Endothelial cell of umbilical vein (primary cell): ENCODE measurements at regions of chr1 and their contacts with region 1.

Region 1: GRCh38 chr1:234987415-234988154 is 141.1 kb downstream of the TOMM20 start:
- DNase-seq: peak; percentile 98
- H3K4me3 ChIP-seq: no peak overlapping the region
- H3K27ac ChIP-seq: peak overlapping the region; percentile 100
- H3K4me1 ChIP-seq: peaks cover 47% of the 10 kb centered on the region
- H3K27me3 ChIP-seq: no peaks in the 10 kb centered on the region
- CTCF ChIP-seq: no peak
- POLR2A ChIP-seq: no peak

Region 2: DNA sequence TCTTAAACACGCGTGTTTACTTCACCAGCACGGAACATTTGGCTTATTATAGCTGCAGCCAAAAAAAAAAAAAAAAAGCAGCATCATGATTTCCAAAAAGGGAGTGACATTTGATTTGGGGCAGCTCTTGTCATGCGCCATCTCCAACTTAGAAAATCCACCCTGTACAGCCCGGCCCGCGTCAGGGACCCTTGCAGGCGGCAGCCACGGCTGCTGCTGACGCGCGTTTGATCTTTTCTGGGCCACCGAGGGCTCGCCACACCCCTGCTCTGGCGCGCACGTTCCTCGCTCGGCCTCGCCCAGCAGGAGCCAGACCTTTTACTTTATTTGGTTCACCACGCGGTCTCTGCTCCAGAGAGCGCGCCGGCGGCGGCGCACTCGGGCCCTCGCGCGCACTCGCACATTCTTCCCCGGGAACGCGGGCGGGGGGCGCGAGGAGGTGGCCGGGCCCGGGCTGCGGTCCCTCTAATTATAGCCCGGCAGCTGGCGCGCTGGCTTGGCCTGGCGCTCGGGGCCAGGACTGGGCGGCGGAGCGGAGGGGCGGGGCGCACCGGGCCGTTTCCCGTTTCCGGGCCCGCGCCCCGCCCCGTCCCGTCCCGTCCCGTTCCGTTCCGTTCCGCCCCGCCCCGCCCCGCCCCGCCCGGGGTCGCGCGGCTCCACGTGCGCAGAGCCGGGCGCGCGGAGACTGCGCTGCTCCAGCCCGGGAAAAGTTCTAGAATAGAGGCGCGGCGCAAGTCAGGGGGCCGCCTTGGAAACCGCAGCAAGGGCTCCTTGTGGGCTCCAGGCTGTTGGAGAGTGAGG is 387.8 kb before region 1 on chr1:
- CTCF ChIA-PET with region 1: interaction called, 6 read pairs
- POLR2A ChIA-PET with region 1: interaction called, 8 read pairs
- dilution Hi-C with region 1: loop called (anchors 25 kb)
- intact Hi-C with region 1: loop called (anchors 1 kb)
- DNase-seq: peak; percentile 92
- H3K4me3 ChIP-seq: peak overlapping the region; percentile 18 to 53 (median 32)
- H3K27ac ChIP-seq: peak overlapping the region; percentile 87
- H3K4me1 ChIP-seq: peaks cover 50% of the 10 kb centered on the region
- H3K27me3 ChIP-seq: no peaks in the 10 kb centered on the region
- CTCF ChIP-seq: peak in 1 of 2 donors; percentile 3
- POLR2A ChIP-seq: no peak

Region 3: DNA sequence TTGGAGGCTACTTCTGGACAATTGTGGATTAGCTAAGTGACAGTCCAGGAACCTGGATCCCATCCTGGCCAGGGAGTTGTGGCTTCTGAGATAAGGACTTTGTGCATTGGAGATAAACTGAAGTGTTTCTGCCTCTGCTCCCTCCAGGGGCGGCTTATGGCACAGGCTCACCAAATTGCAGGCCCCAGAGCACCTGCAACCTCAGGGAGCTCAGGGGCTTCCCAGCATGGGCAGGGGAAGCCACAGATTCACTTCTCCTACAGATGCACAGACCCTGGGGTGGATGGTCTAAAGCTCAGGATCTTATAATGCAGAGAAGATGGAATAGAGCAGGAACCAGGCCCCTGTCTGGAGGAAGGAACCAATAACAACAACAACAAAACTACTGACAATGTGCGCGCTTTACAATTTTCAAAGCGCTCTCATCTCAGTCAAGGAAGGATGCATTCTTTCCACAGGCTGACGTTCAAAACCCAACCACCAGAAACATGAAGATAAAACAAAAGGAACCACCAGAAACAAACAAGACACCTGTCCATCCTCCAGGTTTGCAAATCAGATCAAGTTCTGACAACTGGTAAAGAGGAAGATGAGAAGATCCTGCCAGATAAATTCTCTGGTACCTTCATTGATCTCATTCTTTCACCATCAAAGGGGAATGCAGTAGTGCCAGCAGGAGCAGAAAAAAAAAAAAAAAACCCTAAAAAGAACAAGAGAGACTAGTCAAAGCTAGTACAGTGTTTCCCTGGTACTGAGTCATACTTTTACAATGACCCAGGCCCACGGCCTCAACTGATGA is 256.6 kb before region 1 on chr1:
- CTCF ChIA-PET with region 1: no interaction called
- POLR2A ChIA-PET with region 1: no interaction called
- dilution Hi-C with region 1: no loop called
- intact Hi-C with region 1: no loop called
- DNase-seq: no peak
- H3K4me3 ChIP-seq: no peak overlapping the region
- H3K27ac ChIP-seq: no peak overlapping the region
- H3K4me1 ChIP-seq: peaks cover 24% of the 10 kb centered on the region
- H3K27me3 ChIP-seq: no peaks in the 10 kb centered on the region
- CTCF ChIP-seq: no peak
- POLR2A ChIP-seq: no peak

Region 4: GRCh38 chr1:234743791-234744611 is 243.6 kb before region 1 on chr1:
- CTCF ChIA-PET with region 1: interaction called, 6 read pairs
- POLR2A ChIA-PET with region 1: no interaction called
- dilution Hi-C with region 1: no loop called
- intact Hi-C with region 1: loop called (anchors 1 kb)
- DNase-seq: peak; percentile 99
- H3K4me3 ChIP-seq: peak overlapping the region in 1 of 3 experiments; percentile 7
- H3K27ac ChIP-seq: peak overlapping the region; percentile 88
- H3K4me1 ChIP-seq: peaks cover 36% of the 10 kb centered on the region
- H3K27me3 ChIP-seq: no peaks in the 10 kb centered on the region
- CTCF ChIP-seq: peak in 1 of 2 donors; percentile 15
- POLR2A ChIP-seq: peak; percentile 91

Region 5: DNA sequence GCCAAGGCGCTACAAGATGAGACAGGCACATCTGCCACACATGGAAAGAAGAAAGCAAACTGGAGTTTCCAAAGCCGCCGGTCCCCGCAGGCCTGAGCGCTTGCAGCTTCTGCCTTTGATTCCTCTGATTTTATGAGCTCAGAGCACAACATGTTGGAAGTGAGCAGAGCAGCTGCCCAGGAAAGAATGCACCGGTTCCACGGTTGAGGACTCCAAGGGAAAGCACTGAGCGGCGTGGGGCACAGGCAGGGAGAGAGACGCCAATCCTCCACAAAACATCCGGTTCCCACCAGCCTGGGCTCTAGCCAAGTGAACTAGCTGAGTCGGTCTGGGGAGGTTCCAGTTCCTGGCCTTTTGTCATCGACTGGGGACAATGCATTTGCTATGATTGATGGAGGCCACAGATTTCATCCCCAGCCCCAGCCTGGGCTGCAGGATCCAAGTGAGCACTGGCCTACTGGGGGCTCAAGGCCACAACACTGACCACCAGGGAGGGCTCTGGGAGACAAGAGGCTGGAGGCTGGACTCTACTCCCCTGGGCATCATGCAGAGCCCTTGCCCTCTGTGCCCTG is 124.6 kb before region 1 on chr1:
- CTCF ChIA-PET with region 1: no interaction called
- POLR2A ChIA-PET with region 1: no interaction called
- dilution Hi-C with region 1: no loop called
- intact Hi-C with region 1: loop called (anchors 2 kb)
- DNase-seq: peak; percentile 96
- H3K4me3 ChIP-seq: no peak overlapping the region
- H3K27ac ChIP-seq: peak overlapping the region; percentile 85
- H3K4me1 ChIP-seq: peaks cover 46% of the 10 kb centered on the region
- H3K27me3 ChIP-seq: no peaks in the 10 kb centered on the region
- CTCF ChIP-seq: no peak
- POLR2A ChIP-seq: no peak

Region 6: GRCh38 chr1:234925440-234926263 is 61.9 kb before region 1 on chr1:
- CTCF ChIA-PET with region 1: no interaction called
- POLR2A ChIA-PET with region 1: interaction called, 12 read pairs
- dilution Hi-C with region 1: no loop called
- intact Hi-C with region 1: no loop called
- DNase-seq: peak; percentile 94
- H3K4me3 ChIP-seq: no peak overlapping the region
- H3K27ac ChIP-seq: peak overlapping the region; percentile 90
- H3K4me1 ChIP-seq: peaks cover 41% of the 10 kb centered on the region
- H3K27me3 ChIP-seq: no peaks in the 10 kb centered on the region
- CTCF ChIP-seq: no peak
- POLR2A ChIP-seq: no peak

Region 7: GRCh38 chr1:235050911-235051360 is 63.4 kb after region 1 on chr1:
- CTCF ChIA-PET with region 1: no interaction called
- POLR2A ChIA-PET with region 1: no interaction called
- dilution Hi-C with region 1: no loop called
- intact Hi-C with region 1: loop called (anchors 1 kb)
- DNase-seq: peak; percentile 18
- H3K4me3 ChIP-seq: no peak overlapping the region
- H3K27ac ChIP-seq: no peak overlapping the region
- H3K4me1 ChIP-seq: peaks cover 14% of the 10 kb centered on the region
- H3K27me3 ChIP-seq: no peaks in the 10 kb centered on the region
- CTCF ChIP-seq: no peak
- POLR2A ChIP-seq: no peak